HEK293 (cell line): ENCODE measurements at regions of chr6 and their contacts with region 1.

Region 1: GRCh38 chr6:121849477-121849876 is 414.0 kb downstream of the GJA1 start:
- H3K4me3 ChIP-seq: no peak overlapping the region
- H3K27ac ChIP-seq: no peak overlapping the region
- H3K4me1 ChIP-seq: no peaks in the 10 kb centered on the region
- CTCF ChIP-seq: peak; percentile 34; the same call in 1 of the 2 replicates

Region 2: DNA sequence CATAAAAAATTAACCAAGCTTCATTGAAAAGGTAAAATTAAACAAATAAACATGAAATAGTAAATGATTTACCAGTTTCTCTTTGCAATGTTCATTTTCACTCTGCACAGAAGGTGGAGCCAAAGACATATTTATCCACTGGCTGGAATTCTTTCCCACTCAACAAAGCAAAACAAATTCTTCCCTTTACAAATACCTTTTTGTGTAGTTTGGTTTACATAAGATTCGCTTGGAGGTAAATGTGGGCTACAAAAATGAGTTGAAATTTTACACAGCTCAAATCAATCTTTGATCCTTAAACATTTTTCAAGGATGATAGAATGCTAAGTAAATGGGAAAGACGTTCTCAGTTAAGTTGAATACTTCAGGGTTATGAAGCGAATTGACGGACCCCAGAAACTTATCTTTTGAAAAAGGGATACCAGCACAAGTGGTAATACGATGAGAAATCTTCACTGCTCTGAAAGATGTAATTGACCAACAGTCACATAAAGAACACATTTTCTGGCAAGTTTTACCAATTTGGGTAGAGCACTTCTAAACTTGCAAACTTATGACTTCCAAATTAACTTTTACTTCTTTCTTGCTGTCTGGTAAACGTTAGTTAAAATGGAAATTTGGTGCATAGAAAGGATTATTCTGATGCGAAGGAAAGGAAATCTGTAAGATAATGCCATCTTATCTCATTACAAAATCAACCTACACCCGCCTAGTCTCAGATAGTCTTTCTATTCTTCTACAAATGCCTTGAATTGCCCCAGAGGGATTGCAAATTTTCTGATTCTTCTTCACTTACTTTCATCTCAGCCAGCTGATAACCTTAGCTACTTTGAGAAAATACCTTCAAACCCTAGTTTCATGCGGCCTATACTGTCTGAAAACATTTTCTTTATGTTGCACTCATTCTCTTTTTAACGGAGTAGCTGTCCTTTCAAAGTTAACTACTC is 418.7 kb before region 1 on chr6:
- CTCF ChIA-PET with region 1: interaction called, 88 read pairs
- POLR2A ChIA-PET with region 1: no interaction called
- H3K4me3 ChIP-seq: no peak overlapping the region
- H3K27ac ChIP-seq: no peak overlapping the region
- H3K4me1 ChIP-seq: no peaks in the 10 kb centered on the region
- CTCF ChIP-seq: 0 out of 2 replicates have a peak, but pooled peaks have one; percentile 35

Region 3: GRCh38 chr6:121436960-121437850 is 412.3 kb before region 1 on chr6:
- CTCF ChIA-PET with region 1: interaction called, 88 read pairs
- POLR2A ChIA-PET with region 1: interaction called, 4 read pairs
- H3K4me3 ChIP-seq: peak overlapping the region; percentile 53
- H3K27ac ChIP-seq: peak overlapping the region; percentile 67
- H3K4me1 ChIP-seq: peaks cover 3% of the 10 kb centered on the region; the same call in 1 of the 2 replicates
- CTCF ChIP-seq: no peak

Region 4: DNA sequence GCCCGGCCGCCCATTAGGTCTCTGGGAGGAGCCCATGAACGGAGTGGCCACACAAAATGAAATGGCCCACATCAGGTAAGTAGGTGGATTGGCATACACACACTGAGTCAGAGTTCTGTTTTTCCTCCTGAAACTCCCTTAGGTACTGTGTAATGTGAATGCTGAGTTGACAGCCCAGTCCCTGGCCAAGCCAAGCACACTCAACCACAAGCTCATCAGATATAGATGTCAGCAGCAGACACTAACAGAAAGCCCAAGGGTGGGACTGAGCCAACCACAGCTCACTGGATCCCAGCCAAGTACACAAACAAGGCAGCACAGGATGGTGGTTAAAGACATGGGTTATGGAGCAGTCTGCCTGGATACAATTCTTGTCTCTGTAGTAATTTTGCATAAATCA is 10.6 kb before region 1 on chr6:
- CTCF ChIA-PET with region 1: interaction called, 31 read pairs
- POLR2A ChIA-PET with region 1: no interaction called
- H3K4me3 ChIP-seq: no peak overlapping the region
- H3K27ac ChIP-seq: no peak overlapping the region
- H3K4me1 ChIP-seq: 0 out of 2 replicates have a peak, but pooled peaks cover 5% of the 10 kb centered on the region
- CTCF ChIP-seq: no peak

Region 5: GRCh38 chr6:121999456-122000065 is 150.1 kb after region 1 on chr6:
- CTCF ChIA-PET with region 1: no interaction called
- POLR2A ChIA-PET with region 1: no interaction called
- H3K4me3 ChIP-seq: no peak overlapping the region
- H3K27ac ChIP-seq: no peak overlapping the region
- H3K4me1 ChIP-seq: no peaks in the 10 kb centered on the region
- CTCF ChIP-seq: no peak